ENCODE measurements at regions of chr18 and their contacts with region 1.

Region 1: DNA sequence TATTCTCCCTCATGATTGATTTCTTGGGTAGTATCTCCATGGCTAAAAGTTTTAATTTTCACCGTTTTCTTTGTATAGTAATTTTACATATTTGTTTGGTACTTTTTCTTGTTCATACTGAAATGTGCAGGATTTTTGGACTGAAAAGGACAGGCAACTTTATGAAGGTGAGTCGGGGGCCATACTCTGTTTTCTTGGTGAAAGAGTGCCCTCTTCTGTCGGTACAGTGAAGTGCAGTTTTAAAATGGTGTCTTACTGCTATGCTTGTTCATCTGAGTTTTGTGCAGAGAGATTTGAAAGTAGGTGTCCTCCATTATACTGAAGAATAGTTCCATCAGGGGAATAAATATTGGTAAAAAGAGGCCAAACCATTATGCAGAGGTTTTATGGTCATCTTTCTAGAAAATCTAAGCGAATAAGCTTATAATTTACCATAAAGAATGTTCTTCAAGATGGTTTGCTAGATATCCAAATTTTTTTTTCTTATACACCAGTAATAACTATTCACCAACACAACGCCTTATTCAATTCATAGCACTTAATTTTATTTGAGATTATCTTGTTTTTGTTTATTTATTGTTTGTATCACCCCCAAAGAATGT is 8.7 kb upstream of the SERPINB13 start:
- DNase-seq: peak; percentile 11
- H3K4me3 ChIP-seq: no peak overlapping the region
- H3K27me3 ChIP-seq: no peaks in the 10 kb centered on the region
- CTCF ChIP-seq: peak; percentile 81

Region 2: GRCh38 chr18:63367053-63367953 is 211.2 kb before region 1 on chr18 and contains the start of gene KDSR:
- CTCF ChIA-PET with region 1: no interaction called
- POLR2A ChIA-PET with region 1: no interaction called
- DNase-seq: peak; percentile 93
- H3K4me3 ChIP-seq: peak within 1 kb of the TSS; percentile 96
- H3K27me3 ChIP-seq: no peaks in the 10 kb centered on the region
- CTCF ChIP-seq: 0 out of 2 replicates have a peak, but pooled peaks have one; percentile 3
- polyA plus RNA-seq, gene KDSR: 29.1 and 32.0 TPM in 2 replicates

Region 3: DNA sequence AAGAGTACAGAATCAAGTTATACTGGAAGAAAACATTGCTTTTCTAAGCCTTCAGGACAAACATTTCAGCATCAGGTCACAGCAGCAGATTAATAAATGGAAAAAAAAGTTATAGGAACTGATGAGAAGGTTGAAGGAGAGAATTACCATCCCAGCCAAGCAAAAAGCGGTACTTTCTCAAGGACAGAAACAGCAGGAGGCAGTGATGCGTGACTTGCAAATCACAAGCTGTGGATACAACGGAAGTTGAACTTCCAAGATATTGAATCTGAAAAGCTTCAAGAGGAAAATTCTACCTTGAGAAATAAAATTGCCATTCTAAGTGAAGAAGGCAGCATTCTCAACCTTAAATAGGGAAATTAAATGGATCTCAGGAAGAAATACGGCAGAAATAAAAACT is 54.8 kb before region 1 on chr18:
- CTCF ChIA-PET with region 1: interaction called, 328 read pairs
- POLR2A ChIA-PET with region 1: interaction called, 4 read pairs
- DNase-seq: no peak
- H3K4me3 ChIP-seq: no peak overlapping the region
- H3K27me3 ChIP-seq: no peaks in the 10 kb centered on the region
- CTCF ChIP-seq: no peak

Region 4: GRCh38 chr18:63528863-63529492 is 49.5 kb before region 1 on chr18:
- CTCF ChIA-PET with region 1: interaction called, 19 read pairs
- POLR2A ChIA-PET with region 1: no interaction called
- DNase-seq: no peak
- H3K4me3 ChIP-seq: no peak overlapping the region
- H3K27me3 ChIP-seq: peaks cover 2% of the 10 kb centered on the region; the same call in 1 of the 2 replicates
- CTCF ChIP-seq: no peak

Region 5: DNA sequence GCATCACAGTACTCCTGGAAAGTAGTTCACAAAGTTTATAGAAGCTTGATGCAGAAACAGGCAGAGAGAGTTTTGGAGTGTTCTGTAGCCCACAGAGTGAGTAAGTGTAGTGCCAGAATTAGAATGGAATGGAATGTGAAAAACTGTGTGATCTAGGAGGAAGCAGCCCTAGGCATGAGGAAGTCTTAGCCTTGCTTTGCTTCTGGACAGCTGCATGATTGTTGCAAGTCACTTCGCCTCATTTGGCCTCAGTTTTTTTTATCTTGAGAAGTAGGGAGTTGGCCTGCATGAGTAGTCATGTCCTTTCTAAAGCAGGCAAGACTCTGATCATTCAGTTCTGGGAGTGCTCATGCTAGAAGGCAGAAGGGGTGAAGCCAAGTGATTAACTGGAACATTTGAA is 25.3 kb before region 1 on chr18:
- CTCF ChIA-PET with region 1: interaction called, 13 read pairs
- POLR2A ChIA-PET with region 1: no interaction called
- DNase-seq: peak; percentile 95
- H3K4me3 ChIP-seq: no peak overlapping the region
- H3K27me3 ChIP-seq: no peaks in the 10 kb centered on the region
- CTCF ChIP-seq: no peak

Region 6: GRCh38 chr18:63564561-63564960 is 13.9 kb before region 1 on chr18:
- CTCF ChIA-PET with region 1: interaction called, 33 read pairs
- POLR2A ChIA-PET with region 1: no interaction called
- DNase-seq: no peak
- H3K4me3 ChIP-seq: no peak overlapping the region
- H3K27me3 ChIP-seq: no peaks in the 10 kb centered on the region
- CTCF ChIP-seq: no peak

Region 7: GRCh38 chr18:63590373-63590772 is 11.9 kb after region 1 on chr18:
- CTCF ChIA-PET with region 1: interaction called, 48 read pairs
- POLR2A ChIA-PET with region 1: no interaction called
- DNase-seq: no peak
- H3K4me3 ChIP-seq: no peak overlapping the region
- H3K27me3 ChIP-seq: no peaks in the 10 kb centered on the region
- CTCF ChIP-seq: no peak

Region 8: GRCh38 chr18:63848159-63848558 is 269.7 kb after region 1 on chr18:
- CTCF ChIA-PET with region 1: interaction called, 33 read pairs
- POLR2A ChIA-PET with region 1: no interaction called
- DNase-seq: no peak
- H3K4me3 ChIP-seq: no peak overlapping the region
- H3K27me3 ChIP-seq: no peaks in the 10 kb centered on the region
- CTCF ChIP-seq: peak; percentile 73